ENCODE measurements at regions of chr17 and their contacts with region 1.

Region 1: GRCh38 chr17:74961657-74962490 is 10.7 kb downstream of the HID1 start:
- DNase-seq: peak; percentile 76 to 80 (median 77)
- H3K4me3 ChIP-seq: no peak overlapping the region
- H3K4me3 Mint-ChIP-seq: peak overlapping the region in 1 of 8 donors; percentile 31
- H3K27ac ChIP-seq: no peak overlapping the region
- H3K27ac Mint-ChIP-seq: peak overlapping the region in 2 of 7 donors; percentile 59 to 66
- H3K4me1 ChIP-seq: peaks cover 6% of the 10 kb centered on the region
- H3K4me1 Mint-ChIP-seq: peaks cover 4 to 13% (median 8%) of the 10 kb centered on the region in 4 donors
- H3K27me3 ChIP-seq: no peaks in the 10 kb centered on the region
- H3K27me3 Mint-ChIP-seq: no peaks in the 10 kb centered on the region

Region 2: DNA sequence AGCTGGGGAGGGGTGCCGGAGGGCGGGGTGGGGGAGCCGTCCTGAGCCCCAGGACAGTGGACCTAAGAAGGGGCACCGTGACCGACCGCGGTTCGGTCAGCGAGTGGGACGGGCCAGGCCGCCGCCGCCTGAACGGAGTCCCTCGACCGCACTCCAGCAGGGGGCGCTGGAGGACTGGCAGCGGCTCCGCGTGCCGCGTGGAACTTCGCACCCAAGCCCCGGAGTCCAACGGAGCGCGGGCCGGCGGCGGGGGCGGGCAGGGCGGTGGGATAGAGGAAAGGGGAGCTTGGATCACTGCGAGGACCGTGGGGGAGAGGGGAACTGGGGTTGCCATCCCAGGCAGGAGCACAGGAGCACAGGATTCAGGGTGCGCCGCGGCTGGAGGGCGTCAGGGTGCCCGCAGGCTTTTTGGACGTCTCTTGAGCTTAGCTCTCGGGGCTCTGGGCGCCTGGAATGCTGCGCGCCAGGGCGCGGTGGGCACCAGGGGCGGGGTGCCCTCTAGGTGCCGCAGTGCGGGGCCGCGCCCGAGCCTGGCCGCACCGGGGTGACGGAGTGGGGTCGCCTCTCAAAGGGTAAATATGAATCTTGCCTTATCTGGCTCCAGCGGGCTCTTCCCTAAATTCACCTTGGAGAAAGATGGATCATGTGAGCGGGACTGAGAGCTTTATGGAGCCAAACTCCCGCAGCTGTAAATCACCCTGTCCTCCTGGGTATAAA is 38.2 kb before region 1 on chr17:
- CTCF ChIA-PET with region 1: interaction called, 33 read pairs
- POLR2A ChIA-PET with region 1: no interaction called
- intact Hi-C with region 1: loop called (anchors 1 kb)
- DNase-seq: peak; percentile 57 to 76 (median 68)
- H3K4me3 ChIP-seq: peak overlapping the region in 1 of 2 donors; percentile 14
- H3K4me3 Mint-ChIP-seq: peak overlapping the region in 6 of 8 donors; percentile 13 to 54 (median 44)
- H3K27ac ChIP-seq: no peak overlapping the region
- H3K27ac Mint-ChIP-seq: no peak overlapping the region
- H3K4me1 ChIP-seq: peaks cover 18% of the 10 kb centered on the region
- H3K4me1 Mint-ChIP-seq: peaks cover 1 to 17% (median 11%) of the 10 kb centered on the region in 4 donors
- H3K27me3 ChIP-seq: peaks cover 32% of the 10 kb centered on the region
- H3K27me3 Mint-ChIP-seq: peaks cover 40 to 46% of the 10 kb centered on the region in 2 donors

Region 3: GRCh38 chr17:74981979-74982662 is 20.2 kb after region 1 on chr17:
- CTCF ChIA-PET with region 1: interaction called, 20 read pairs
- POLR2A ChIA-PET with region 1: interaction called, 5 read pairs
- intact Hi-C with region 1: no loop called
- DNase-seq: peak; percentile 83 to 87 (median 85)
- H3K4me3 ChIP-seq: peak overlapping the region; percentile 70 to 91
- H3K4me3 Mint-ChIP-seq: peak overlapping the region; percentile 86 to 94 (median 90)
- H3K27ac ChIP-seq: peak overlapping the region; percentile 30
- H3K27ac Mint-ChIP-seq: peak overlapping the region; percentile 89 to 98 (median 95)
- H3K4me1 ChIP-seq: peaks cover 27% of the 10 kb centered on the region
- H3K4me1 Mint-ChIP-seq: peaks cover 14 to 35% (median 18%) of the 10 kb centered on the region in 4 donors
- H3K27me3 ChIP-seq: no peaks in the 10 kb centered on the region
- H3K27me3 Mint-ChIP-seq: peaks cover 0 to under 1% of the 10 kb centered on the region in 2 donors

Region 4: DNA sequence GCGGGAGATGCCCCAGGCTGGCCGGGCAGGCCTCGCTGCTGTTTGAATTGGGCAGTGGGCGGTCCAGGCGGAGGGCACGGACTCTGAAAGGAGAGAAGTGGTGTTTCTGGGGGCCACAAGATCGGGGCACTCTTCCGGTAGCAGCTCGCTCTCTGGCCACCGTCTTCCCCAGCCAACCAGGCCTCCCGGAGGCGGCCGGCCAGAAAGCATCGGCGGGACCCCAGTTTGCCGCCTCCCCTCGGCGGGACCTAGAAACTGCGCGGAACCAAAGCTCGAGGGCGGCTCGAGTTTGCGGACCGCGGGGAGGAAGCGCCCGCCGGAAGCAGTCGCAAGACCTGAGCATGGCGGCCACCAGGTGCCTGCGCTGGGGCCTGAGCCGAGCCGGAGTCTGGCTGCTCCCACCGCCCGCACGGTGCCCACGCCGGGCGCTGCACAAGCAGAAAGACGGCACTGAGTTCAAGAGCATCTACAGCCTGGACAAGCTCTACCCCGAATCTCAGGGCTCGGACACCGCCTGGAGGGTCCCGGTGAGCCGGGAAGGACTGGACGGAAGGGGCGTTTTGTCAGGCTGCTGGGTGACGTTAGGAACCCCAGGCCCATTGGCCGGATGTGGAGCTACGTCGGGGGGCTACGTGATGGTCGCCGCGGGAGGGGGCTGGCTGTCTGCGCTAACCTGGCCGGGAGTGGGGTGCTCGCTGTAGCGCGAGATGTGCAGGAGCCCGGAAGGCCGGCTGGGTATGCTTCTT is 50.6 kb after region 1 on chr17 and contains the start of gene MRPL58:
- CTCF ChIA-PET with region 1: interaction called, 89 read pairs
- POLR2A ChIA-PET with region 1: interaction called, 20 read pairs
- intact Hi-C with region 1: loop called (anchors 1 kb)
- DNase-seq: peak; percentile 75 to 79 (median 76)
- H3K4me3 ChIP-seq: peak within 1 kb of the TSS; percentile 85 to 90
- H3K4me3 Mint-ChIP-seq: peak within 1 kb of the TSS; percentile 93 to 98 (median 96)
- H3K27ac ChIP-seq: peak within 1 kb of the TSS; percentile 71
- H3K27ac Mint-ChIP-seq: peak within 1 kb of the TSS; percentile 80 to 94 (median 92)
- H3K4me1 ChIP-seq: peaks cover 19% of the 10 kb centered on the region
- H3K4me1 Mint-ChIP-seq: peaks cover 20 to 44% (median 32%) of the 10 kb centered on the region in 4 donors
- H3K27me3 ChIP-seq: no peaks in the 10 kb centered on the region
- H3K27me3 Mint-ChIP-seq: no peaks in the 10 kb centered on the region
- total RNA-seq, gene MRPL58: 22.6 to 26.7 TPM

Region 5: GRCh38 chr17:75131280-75132017 is 169.6 kb after region 1 on chr17 and contains the start of gene NT5C:
- CTCF ChIA-PET with region 1: interaction called, 24 read pairs
- POLR2A ChIA-PET with region 1: no interaction called
- intact Hi-C with region 1: loop called (anchors 1 kb)
- DNase-seq: peak in 4 of 5 donors; percentile 38 to 60 (median 49)
- H3K4me3 ChIP-seq: peak within 1 kb of the TSS; percentile 61 to 74
- H3K4me3 Mint-ChIP-seq: peak within 1 kb of the TSS; percentile 87 to 91 (median 90)
- H3K27ac ChIP-seq: peak within 1 kb of the TSS; percentile 80
- H3K27ac Mint-ChIP-seq: peak within 1 kb of the TSS; percentile 81 to 92 (median 88)
- H3K4me1 ChIP-seq: peaks cover 16% of the 10 kb centered on the region
- H3K4me1 Mint-ChIP-seq: peaks cover 8 to 19% (median 11%) of the 10 kb centered on the region in 4 donors
- H3K27me3 ChIP-seq: no peaks in the 10 kb centered on the region
- H3K27me3 Mint-ChIP-seq: no peaks in the 10 kb centered on the region
- total RNA-seq, gene NT5C: 40.1 to 46.6 TPM

Region 6: DNA sequence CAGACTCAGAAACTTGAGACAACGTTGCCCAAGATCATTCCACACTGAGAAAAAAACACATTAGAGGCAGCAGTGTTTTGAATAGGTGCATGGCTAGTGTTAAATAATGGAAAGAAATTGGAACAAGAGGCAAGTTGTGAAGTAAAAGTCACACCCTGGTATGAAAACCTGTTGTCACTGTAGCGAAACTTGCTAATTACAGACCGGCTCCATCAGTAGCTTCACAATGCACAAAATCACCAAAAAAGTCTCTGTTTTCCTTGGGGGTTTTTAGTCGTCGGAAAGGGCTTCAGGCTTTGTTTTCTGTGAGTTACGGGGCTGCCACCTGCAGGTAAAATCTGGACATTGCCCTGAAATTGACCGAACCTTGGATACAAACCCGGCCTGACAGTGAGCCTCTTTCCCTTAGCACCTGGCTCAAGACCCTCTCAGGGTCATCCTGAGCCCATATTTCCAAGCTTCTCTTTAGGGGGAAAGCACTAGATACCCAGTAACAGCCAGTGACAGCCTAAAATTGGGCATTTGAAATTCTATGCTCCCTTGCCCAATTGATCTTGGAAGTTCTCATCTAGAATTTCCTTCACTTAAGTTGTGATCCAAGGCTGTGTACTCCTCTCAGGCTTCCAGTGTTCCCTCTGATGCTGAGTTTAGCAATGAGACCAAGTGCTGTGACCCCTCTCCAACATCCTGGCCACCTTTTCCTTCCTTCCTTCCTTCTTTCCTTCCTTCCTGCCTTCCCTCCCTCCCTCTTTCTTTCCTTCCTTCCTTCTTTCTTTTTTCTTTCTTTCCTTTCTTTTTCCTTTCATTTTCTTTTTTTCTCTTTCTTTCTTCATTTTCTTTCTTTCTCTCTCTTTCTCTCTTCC is 450.8 kb after region 1 on chr17:
- CTCF ChIA-PET with region 1: interaction called, 11 read pairs
- POLR2A ChIA-PET with region 1: interaction called, 3 read pairs
- intact Hi-C with region 1: loop called (anchors 10 kb)
- DNase-seq: peak; percentile 66 to 79 (median 77)
- H3K4me3 ChIP-seq: no peak overlapping the region
- H3K4me3 Mint-ChIP-seq: peak overlapping the region in 7 of 8 donors; percentile 0 to 68 (median 6)
- H3K27ac ChIP-seq: no peak overlapping the region
- H3K27ac Mint-ChIP-seq: peak overlapping the region in 5 of 7 donors; percentile 0 to 29 (median 3)
- H3K4me1 ChIP-seq: peaks cover 13% of the 10 kb centered on the region
- H3K4me1 Mint-ChIP-seq: peaks cover 7 to 16% (median 11%) of the 10 kb centered on the region in 4 donors
- H3K27me3 ChIP-seq: no peaks in the 10 kb centered on the region
- H3K27me3 Mint-ChIP-seq: peaks cover 5 to 6% of the 10 kb centered on the region in 2 donors

Measured in CD4-positive, alpha-beta memory T cell (primary cell).